Psoas muscle (tissue), 8 donors: ENCODE measurements at regions of chr2 and their contacts with region 1.

Region 1: GRCh38 chr2:130827502-130828251 is 9.0 kb upstream of the ARHGEF4 start:
- DNase-seq: no peak
- ATAC-seq: no peak
- H3K4me3 ChIP-seq: no peak overlapping the region
- H3K27ac ChIP-seq: no peak overlapping the region
- H3K4me1 ChIP-seq: no peaks in the 10 kb centered on the region
- H3K27me3 ChIP-seq: peaks cover 0 to 9% (median 2%) of the 10 kb centered on the region in 3 donors
- CTCF ChIP-seq: no peak

Region 2: GRCh38 chr2:130744287-130745117 is 83.2 kb before region 1 on chr2:
- intact Hi-C with region 1: no loop called
- DNase-seq: no peak
- ATAC-seq: no peak
- H3K4me3 ChIP-seq: no peak overlapping the region
- H3K27ac ChIP-seq: no peak overlapping the region
- H3K4me1 ChIP-seq: no peaks in the 10 kb centered on the region
- H3K27me3 ChIP-seq: peaks cover 0 to 4% (median 0%) of the 10 kb centered on the region in 3 donors
- CTCF ChIP-seq: no peak

Region 3: GRCh38 chr2:130810490-130810889 is 17.2 kb before region 1 on chr2:
- intact Hi-C with region 1: loop called in 1 of 2 experiments (anchors 2 kb)
- DNase-seq: no peak
- ATAC-seq: no peak
- H3K4me3 ChIP-seq: no peak overlapping the region
- H3K27ac ChIP-seq: no peak overlapping the region
- H3K4me1 ChIP-seq: no peaks in the 10 kb centered on the region
- H3K27me3 ChIP-seq: no peaks in the 10 kb centered on the region
- CTCF ChIP-seq: no peak

Region 4: GRCh38 chr2:131004446-131005209 is 177.0 kb after region 1 on chr2:
- intact Hi-C with region 1: no loop called
- DNase-seq: no peak
- ATAC-seq: no peak
- H3K4me3 ChIP-seq: no peak overlapping the region
- H3K27ac ChIP-seq: no peak overlapping the region
- H3K4me1 ChIP-seq: no peaks in the 10 kb centered on the region
- H3K27me3 ChIP-seq: peaks cover 0 to 5% (median 0%) of the 10 kb centered on the region in 3 donors
- CTCF ChIP-seq: no peak